Activated CD4-positive, alpha-beta T cell treated with anti-CD3 and anti-CD28 coated beads, Interleukin-2, amount 10 ng/mL, durations not matched to agents 24 days and 14 days (primary cell): ENCODE measurements at regions of chrX and their contacts with region 1.

Region 1: DNA sequence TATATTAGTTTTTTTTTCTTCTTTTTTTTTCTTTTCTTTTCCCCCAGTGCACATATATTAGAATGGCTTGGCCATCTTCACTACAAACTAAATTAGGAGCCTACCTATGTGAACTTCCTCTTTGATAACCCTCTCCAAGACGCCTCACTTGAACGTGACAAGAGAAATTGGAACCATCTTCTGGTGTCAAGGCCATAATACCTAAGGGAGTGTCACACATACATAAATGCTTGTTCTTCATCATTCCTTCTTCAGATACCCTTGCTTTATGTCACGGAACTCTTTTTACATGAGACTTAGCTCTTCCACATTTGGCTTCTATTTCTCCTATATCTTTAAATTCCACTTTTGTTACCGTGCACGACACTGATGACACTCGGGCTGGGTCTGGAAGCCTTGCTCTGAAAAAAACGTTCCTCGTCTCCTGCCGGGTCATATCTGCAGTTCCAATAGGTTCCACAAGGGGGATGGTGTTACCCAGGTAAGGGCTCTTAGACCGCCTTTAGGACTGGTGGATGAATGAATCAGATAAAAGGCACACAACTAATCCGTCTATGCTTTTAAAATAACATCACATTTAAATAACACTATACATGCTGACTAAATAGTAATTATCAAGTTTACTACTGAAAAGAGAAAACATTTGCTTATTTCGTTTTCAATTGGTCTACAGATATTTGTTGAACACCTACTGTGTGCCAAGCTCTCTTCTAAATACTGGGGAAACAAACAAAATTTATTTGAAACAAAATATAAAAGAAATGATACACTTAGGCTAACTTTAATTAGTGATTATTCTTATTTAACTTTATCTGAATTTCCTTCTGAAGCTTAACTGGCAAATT is 19.9 kb downstream of the DGAT2L6 start:
- DNase-seq: peak; percentile 88
- H3K4me3 Mint-ChIP-seq: no peak overlapping the region
- H3K27ac Mint-ChIP-seq: no peak overlapping the region
- H3K4me1 Mint-ChIP-seq: peaks cover 4% of the 10 kb centered on the region
- H3K27me3 Mint-ChIP-seq: peaks cover 12% of the 10 kb centered on the region

Region 2: GRCh38 chrX:70231666-70232065 is 34.5 kb after region 1 on chrX:
- intact Hi-C with region 1: loop called (anchors 1 kb)
- DNase-seq: no peak
- H3K4me3 Mint-ChIP-seq: no peak overlapping the region
- H3K27ac Mint-ChIP-seq: peak overlapping the region; percentile 41
- H3K4me1 Mint-ChIP-seq: peaks cover 10% of the 10 kb centered on the region
- H3K27me3 Mint-ChIP-seq: no peaks in the 10 kb centered on the region

Region 3: DNA sequence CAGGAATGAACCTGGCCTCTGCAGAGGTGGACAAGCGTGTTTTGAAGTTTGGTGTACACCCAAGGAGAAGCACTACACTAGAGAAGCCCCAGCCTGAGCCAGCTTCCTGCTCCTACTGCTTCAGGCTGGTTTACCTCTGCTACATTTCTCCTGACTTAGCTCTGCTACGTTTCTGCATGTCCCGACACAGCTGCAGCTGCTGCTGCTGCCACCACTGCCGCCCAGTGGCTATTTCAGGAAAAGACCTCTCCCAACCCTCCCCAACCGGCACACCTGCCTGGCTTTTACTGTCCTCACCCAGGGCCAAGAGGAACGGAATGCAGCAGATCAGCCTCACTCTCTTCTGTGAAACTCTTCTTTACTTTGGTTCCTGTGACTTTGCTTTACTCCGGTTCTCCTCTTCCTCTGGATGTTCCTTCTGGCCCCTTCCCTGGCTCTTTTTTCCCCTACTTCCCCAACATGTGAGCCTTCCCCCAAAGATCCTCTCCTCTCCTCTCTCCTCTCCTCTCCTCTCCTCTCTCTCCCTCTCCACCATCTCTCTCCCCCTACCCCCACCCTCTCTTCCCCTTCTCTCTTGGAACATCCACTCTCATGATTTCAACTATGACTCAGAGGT is 65.9 kb after region 1 on chrX:
- intact Hi-C with region 1: loop called (anchors 1 kb)
- DNase-seq: peak; percentile 77
- H3K4me3 Mint-ChIP-seq: no peak overlapping the region
- H3K27ac Mint-ChIP-seq: no peak overlapping the region
- H3K4me1 Mint-ChIP-seq: no peaks in the 10 kb centered on the region
- H3K27me3 Mint-ChIP-seq: no peaks in the 10 kb centered on the region